HCT116 (cell line): ENCODE measurements at regions of chr13 and their contacts with region 1.

Region 1: DNA sequence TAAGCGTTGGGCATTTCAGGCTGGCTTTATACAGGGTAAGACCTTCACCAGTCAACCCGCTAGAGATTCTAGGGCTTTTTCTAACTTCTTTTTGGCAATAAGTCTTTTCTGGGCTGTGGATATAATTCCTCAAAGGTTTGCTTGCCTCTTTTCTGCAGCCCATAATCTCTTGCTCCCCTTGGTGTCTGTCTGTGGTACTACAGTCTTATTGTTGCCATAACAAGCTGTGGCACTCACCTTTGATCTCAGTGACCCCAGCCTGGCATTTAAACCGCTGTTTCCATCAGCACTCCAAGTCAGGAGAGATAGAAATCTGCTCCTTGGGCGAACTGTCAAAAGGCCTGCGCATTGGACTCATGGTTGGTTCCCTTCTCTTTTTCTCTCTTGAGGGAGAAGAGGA is 14.5 kb upstream of the MPHOSPH8 start:
- DNase-seq: peak; percentile 35
- ATAC-seq: peak; percentile 72
- H3K4me3 ChIP-seq: no peak overlapping the region
- H3K27ac ChIP-seq: no peak overlapping the region
- H3K4me1 ChIP-seq: no peaks in the 10 kb centered on the region
- H3K27me3 ChIP-seq: no peaks in the 10 kb centered on the region
- CTCF ChIP-seq: peak; percentile 25 to 75 (median 68); a peak in 5 of 6 replicates
- POLR2A ChIP-seq: no peak
- RAD21 ChIP-seq: peak; percentile 54

Region 2: DNA sequence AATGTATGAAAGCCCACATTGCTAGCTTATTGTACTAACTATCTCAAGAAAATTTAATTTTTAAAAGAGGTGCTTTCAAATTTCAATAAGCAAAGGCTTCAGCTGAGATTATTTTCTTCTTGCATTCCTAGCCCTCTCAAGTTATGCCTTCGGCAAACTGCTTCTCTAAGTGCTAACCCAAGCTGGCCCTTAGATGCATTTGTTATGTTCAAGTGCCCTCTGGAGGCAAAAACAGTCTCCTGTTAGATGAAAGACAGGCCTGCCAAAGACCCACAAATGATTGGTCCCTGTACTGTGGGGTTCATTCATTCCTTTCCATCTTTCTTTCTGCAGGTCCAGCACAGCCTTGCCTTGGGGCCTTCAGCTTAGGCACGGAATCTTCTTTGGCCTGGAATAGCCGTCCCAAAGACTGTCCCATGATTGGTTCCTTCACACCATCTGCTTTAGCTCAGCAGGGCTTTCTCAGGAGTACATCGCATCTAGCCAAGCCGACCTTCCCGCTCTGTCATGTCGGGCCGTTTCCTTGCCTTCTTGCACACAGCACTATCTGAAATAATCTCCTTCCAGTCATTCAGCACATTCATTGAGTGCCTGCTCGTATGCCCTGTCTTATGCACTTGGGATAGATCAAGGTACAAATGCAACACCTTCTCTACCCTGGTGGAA is 31.2 kb before region 1 on chr13:
- CTCF ChIA-PET with region 1: interaction called, 8 read pairs
- POLR2A ChIA-PET with region 1: no interaction called
- RAD21 ChIA-PET with region 1: no interaction called
- intact Hi-C with region 1: loop called (anchors 1 kb)
- DNase-seq: peak; percentile 27
- ATAC-seq: peak; percentile 95
- H3K4me3 ChIP-seq: no peak overlapping the region
- H3K27ac ChIP-seq: no peak overlapping the region
- H3K4me1 ChIP-seq: peaks cover 0 to 4% of the 10 kb centered on the region in 2 experiments; a peak in 1 of 4 replicates
- H3K27me3 ChIP-seq: no peaks in the 10 kb centered on the region
- CTCF ChIP-seq: peak; percentile 54 to 90 (median 81)
- POLR2A ChIP-seq: no peak
- RAD21 ChIP-seq: peak; percentile 56